OCI-LY7 (cell line): ENCODE measurements at regions of chr1 and their contacts with region 1.

Region 1: DNA sequence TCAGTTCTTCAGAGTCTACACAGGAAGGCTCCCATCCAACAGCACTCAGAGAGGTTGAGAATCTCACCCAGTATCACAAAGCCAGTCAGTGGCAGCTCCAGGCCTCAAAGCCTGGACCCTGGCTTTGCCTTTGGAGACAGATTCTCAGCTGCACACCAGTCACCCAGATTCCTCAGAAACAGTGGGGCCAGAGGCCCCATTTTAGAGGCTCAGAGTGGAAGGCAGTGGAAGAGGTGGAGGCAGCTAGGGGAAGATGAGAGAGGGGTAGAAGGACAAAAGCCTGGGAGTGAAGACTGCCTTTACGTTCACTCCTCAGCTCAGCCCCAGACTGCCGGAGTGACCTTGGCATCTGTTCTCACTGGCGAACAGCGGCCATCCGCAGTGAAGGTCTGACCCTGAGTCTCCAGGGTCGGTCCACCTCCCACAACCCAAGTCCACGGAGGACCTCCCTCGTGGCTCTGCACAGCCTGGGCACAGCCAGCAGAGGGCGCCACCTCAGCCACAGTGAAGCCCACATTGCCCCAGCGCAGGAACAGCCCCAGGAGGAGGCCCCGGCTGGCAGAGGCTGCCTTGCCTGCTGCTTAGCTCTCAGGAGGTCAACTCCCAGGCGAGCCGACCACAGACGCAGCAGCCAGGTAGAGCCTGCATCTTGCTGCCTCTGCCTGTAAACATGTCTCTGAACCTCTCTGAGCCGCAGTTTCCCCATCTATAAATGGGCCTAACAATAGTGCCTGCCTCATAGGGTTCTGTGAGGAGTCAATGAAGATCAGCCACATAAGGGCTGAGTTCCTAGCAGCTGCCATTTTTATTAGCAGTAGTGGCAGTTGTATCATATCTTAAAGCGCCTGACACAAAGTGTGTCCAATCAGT is 5.9 kb upstream of the FNDC5 start:
- DNase-seq: peak; percentile 73
- H3K4me3 ChIP-seq: no peak overlapping the region
- H3K27ac ChIP-seq: no peak overlapping the region
- H3K4me1 ChIP-seq: peaks cover 35% of the 10 kb centered on the region
- CTCF ChIP-seq: peak; percentile 97

Region 2: DNA sequence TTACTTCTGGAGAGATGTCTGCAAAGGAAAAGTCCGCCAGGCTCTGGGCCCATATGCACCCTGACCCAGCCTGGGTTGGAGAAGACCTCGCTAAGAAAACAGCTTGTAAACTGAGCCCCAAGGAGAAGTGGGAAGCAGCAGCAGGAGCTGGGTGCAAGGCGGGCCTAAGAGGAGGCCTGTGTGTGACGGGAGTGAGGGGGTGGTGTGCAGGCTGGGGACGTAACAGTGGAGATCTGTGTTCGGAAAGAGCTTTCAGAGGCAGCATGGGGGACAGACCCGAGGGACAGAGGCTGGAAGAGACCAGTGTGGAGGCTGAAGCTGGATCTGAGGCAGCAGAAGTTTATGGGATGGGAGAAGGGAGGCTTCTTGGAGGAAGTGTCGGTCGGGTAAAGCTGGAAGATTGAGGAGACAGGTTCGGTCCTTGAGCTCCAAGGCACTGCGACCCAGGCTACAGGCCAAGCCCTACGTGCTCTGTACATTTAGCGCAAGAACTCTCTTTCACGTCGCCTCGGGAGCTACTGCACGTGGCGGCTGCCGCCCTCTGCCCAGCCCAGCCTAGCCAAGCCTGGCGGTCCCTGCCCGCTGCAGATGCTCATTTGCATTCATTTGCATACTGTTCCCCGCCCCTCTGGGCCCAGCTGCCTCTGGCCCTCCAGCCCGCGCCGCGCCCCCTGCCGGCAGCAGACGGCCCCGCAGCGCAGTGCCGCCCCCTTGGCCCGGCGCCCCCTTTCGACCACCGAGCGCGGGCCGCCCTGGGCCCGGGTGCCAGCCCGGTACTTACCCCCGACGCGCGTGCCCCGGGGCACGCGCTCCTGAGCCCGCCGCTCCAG is 16.0 kb after region 1 on chr1:
- CTCF ChIA-PET with region 1: no interaction called
- POLR2A ChIA-PET with region 1: no interaction called
- intact Hi-C with region 1: no loop called
- DNase-seq: peak; percentile 76
- H3K4me3 ChIP-seq: peak overlapping the region; percentile 66
- H3K27ac ChIP-seq: no peak overlapping the region
- H3K4me1 ChIP-seq: peaks cover 4% of the 10 kb centered on the region
- CTCF ChIP-seq: peak; percentile 82

Region 3: GRCh38 chr1:32953495-32953894 is 76.9 kb after region 1 on chr1:
- CTCF ChIA-PET with region 1: no interaction called
- POLR2A ChIA-PET with region 1: no interaction called
- intact Hi-C with region 1: no loop called
- DNase-seq: peak; percentile 20
- H3K4me3 ChIP-seq: peak overlapping the region; percentile 4
- H3K27ac ChIP-seq: peak overlapping the region; percentile 47
- H3K4me1 ChIP-seq: peaks cover 95% of the 10 kb centered on the region
- CTCF ChIP-seq: no peak

Region 4: GRCh38 chr1:33086384-33086850 is 209.8 kb after region 1 on chr1:
- CTCF ChIA-PET with region 1: no interaction called
- POLR2A ChIA-PET with region 1: no interaction called
- intact Hi-C with region 1: loop called (anchors 1 kb)
- DNase-seq: peak; percentile 72
- H3K4me3 ChIP-seq: no peak overlapping the region
- H3K27ac ChIP-seq: no peak overlapping the region
- H3K4me1 ChIP-seq: peaks cover 19% of the 10 kb centered on the region
- CTCF ChIP-seq: peak; percentile 84